BJ (cell line): ENCODE measurements at regions of chr3 and their contacts with region 1.

Region 1: GRCh38 chr3:38479431-38480092 is 16.6 kb upstream of the EXOG start:
- DNase-seq: no peak
- H3K4me3 ChIP-seq: no peak overlapping the region
- H3K27me3 ChIP-seq: no peaks in the 10 kb centered on the region
- CTCF ChIP-seq: peak; percentile 90

Region 2: GRCh38 chr3:38117748-38118420 is 361.7 kb before region 1 on chr3:
- CTCF ChIA-PET with region 1: interaction called, 22 read pairs
- POLR2A ChIA-PET with region 1: no interaction called
- DNase-seq: no peak
- H3K4me3 ChIP-seq: no peak overlapping the region
- H3K27me3 ChIP-seq: no peaks in the 10 kb centered on the region
- CTCF ChIP-seq: peak; percentile 83

Region 3: GRCh38 chr3:38468782-38469181 is 10.8 kb before region 1 on chr3:
- CTCF ChIA-PET with region 1: interaction called, 32 read pairs
- POLR2A ChIA-PET with region 1: no interaction called
- DNase-seq: no peak
- H3K4me3 ChIP-seq: no peak overlapping the region
- H3K27me3 ChIP-seq: no peaks in the 10 kb centered on the region
- CTCF ChIP-seq: no peak

Region 4: DNA sequence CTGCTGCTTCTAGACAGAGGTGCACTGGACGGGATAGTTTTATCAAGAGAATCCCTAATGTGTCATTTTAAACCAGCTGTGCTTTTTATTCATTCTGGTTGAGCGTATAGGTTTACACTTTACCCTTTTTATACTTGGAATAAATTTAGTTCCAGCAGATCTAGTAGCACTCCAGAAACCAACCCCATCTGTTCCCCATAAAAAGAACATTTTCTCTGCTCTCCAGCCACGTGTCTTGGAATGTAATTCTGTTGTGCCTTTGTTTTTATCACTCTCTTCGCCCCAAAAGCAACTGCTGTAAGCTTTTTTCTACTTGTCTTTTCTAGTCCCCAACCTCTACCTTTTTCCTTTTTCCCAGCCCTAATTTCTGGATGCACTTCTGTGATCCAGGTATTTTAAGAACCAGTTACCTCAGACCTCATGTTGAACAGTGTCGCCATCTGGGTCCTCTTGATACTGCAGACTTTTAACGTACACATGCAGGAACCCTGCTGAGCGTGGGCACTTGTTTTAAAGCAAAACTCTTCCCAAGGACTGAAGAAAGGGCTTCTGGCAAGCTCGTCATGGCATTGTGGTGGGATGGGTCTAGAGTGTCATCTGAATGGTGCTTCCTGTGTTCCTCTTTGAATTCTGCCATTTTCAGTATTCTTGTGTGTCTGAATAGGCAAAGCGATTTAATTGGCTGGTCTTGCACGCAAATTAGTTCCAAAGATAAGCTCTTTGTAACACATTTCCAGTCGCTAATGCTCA is 10.9 kb after region 1 on chr3:
- CTCF ChIA-PET with region 1: interaction called, 32 read pairs
- POLR2A ChIA-PET with region 1: no interaction called
- DNase-seq: no peak
- H3K4me3 ChIP-seq: no peak overlapping the region
- H3K27me3 ChIP-seq: no peaks in the 10 kb centered on the region
- CTCF ChIP-seq: no peak

Region 5: GRCh38 chr3:38496131-38496910 is 16.8 kb after region 1 on chr3 and contains the start of gene EXOG:
- CTCF ChIA-PET with region 1: interaction called, 32 read pairs
- POLR2A ChIA-PET with region 1: no interaction called
- DNase-seq: peak; percentile 58
- H3K4me3 ChIP-seq: peak within 1 kb of the TSS; percentile 55
- H3K27me3 ChIP-seq: no peaks in the 10 kb centered on the region
- CTCF ChIP-seq: peak; percentile 98
- polyA plus RNA-seq, gene EXOG: 7.5 and 11.8 TPM in 2 replicates